ENCODE measurements at regions of chr4 and their contacts with region 1.

Region 1: GRCh38 chr4:25925486-25926201 is 11.6 kb downstream of the SMIM20 start:
- DNase-seq: no peak
- ATAC-seq: no peak
- H3K4me3 ChIP-seq: no peak overlapping the region
- H3K27ac ChIP-seq: no peak overlapping the region
- H3K4me1 ChIP-seq: peaks cover 54 to 65% of the 10 kb centered on the region in 2 donors
- H3K27me3 ChIP-seq: no peaks in the 10 kb centered on the region
- CTCF ChIP-seq: peak in 4 of 5 experiments; percentile 16 to 44 (median 30)
- POLR2A ChIP-seq: no peak

Region 2: GRCh38 chr4:25767877-25768725 is 157.5 kb before region 1 on chr4:
- in situ Hi-C with region 1: no loop called
- intact Hi-C with region 1: no loop called
- DNase-seq: peak; percentile 6 to 21
- ATAC-seq: peak in 1 of 2 donors; percentile 66
- H3K4me3 ChIP-seq: no peak overlapping the region
- H3K27ac ChIP-seq: no peak overlapping the region
- H3K4me1 ChIP-seq: no peaks in the 10 kb centered on the region
- H3K27me3 ChIP-seq: no peaks in the 10 kb centered on the region
- CTCF ChIP-seq: peak in 4 of 5 experiments; percentile 24 to 70 (median 46)
- POLR2A ChIP-seq: no peak

Region 3: DNA sequence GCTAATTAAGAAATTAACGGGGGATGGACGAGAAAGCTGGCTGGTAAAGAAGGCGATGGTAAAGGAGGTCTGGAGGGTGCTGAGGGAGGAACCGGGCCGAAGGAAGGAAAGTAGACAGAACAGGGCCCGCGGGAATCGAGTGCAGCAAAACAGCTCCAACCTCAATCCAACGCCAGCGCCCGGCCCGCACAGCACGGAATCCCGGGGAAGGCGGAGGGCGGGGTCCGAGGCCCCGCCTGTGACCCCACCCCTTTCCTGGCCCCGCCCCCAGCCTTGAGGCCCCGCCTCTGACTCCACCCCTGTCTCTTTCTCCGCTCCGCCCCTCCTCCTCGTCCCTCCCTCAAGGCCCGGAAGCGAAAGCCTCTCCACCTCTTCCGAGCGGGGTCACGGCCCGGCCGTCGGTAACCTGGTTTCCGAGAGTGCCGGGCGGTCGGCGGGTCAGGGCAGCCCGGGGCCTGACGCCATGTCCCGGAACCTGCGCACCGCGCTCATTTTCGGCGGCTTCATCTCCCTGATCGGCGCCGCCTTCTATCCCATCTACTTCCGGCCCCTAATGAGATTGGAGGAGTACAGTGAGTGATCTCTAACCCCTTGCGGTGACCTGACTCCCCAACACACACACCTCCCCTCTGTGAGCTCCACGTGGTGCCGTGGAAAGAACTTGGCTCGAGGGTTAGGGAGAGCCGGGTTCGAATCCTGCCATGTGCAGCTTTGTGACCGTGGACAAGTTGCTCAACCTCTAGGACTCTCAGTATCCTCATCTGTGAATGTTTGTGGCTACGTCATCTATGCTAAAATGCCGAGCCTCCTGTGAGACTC is 11.6 kb before region 1 on chr4 and contains the start of gene SMIM20:
- in situ Hi-C with region 1: no loop called
- intact Hi-C with region 1: loop called (anchors 2 kb)
- DNase-seq: peak; percentile 90 to 93
- ATAC-seq: peak; percentile 96 to 97
- H3K4me3 ChIP-seq: peak within 1 kb of the TSS; percentile 72 to 83 (median 76)
- H3K27ac ChIP-seq: peak within 1 kb of the TSS; percentile 87 to 97 (median 90)
- H3K4me1 ChIP-seq: peaks cover 14 to 15% of the 10 kb centered on the region in 2 donors
- H3K27me3 ChIP-seq: no peaks in the 10 kb centered on the region
- CTCF ChIP-seq: no peak
- POLR2A ChIP-seq: peak; percentile 77 to 78
- total RNA-seq, gene SMIM20: 36.4 to 59.4 (median 48.3) TPM

Region 4: GRCh38 chr4:26028793-26029567 is 103.3 kb after region 1 on chr4:
- in situ Hi-C with region 1: loop called in 1 of 4 experiments (anchors 25 kb)
- intact Hi-C with region 1: no loop called
- DNase-seq: peak; percentile 14 to 36
- ATAC-seq: peak in 1 of 2 donors; percentile 29
- H3K4me3 ChIP-seq: no peak overlapping the region
- H3K27ac ChIP-seq: no peak overlapping the region
- H3K4me1 ChIP-seq: no peaks in the 10 kb centered on the region
- H3K27me3 ChIP-seq: no peaks in the 10 kb centered on the region
- CTCF ChIP-seq: peak; percentile 14 to 49 (median 39)
- POLR2A ChIP-seq: no peak

Region 5: DNA sequence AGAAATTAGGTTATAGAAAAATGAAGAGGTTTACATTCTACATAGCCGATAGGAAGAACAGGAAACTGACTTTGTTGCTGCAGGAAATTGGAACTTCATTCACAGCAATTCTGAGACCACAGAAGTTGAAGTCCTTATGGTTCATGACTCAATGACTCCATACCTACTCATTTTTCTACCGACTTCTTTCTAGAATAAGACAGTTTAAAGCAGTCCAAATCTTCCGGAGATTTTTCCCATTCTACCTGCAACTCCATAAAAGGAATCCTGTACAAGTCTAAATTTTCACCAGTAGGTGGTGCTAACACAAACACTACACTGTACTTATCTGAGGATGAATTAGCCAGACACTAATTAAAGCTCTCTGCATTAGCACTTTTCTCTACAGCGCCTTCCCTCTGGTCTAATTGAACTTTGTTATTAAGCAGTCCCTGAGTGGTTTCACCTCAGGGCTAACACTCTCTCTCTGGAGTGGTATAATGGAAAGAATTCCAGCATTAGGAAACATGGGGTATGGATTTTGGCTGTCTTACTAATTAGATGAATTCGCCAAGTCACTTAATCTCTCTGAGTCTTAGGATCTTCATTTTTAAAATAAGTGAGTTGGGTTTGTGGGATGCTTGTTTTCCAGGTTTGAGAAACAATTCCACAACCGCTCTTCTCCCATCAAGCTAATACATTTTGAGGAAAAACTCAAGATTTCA is 156.3 kb after region 1 on chr4:
- in situ Hi-C with region 1: no loop called
- intact Hi-C with region 1: loop called (anchors 10 kb)
- DNase-seq: no peak
- ATAC-seq: peak in 1 of 2 donors; percentile 35
- H3K4me3 ChIP-seq: no peak overlapping the region
- H3K27ac ChIP-seq: no peak overlapping the region
- H3K4me1 ChIP-seq: peaks cover 29 to 35% of the 10 kb centered on the region in 2 donors
- H3K27me3 ChIP-seq: no peaks in the 10 kb centered on the region
- CTCF ChIP-seq: peak; percentile 22 to 67 (median 63)
- POLR2A ChIP-seq: no peak